Esophagus muscularis mucosa (tissue), 4 donors: ENCODE measurements at regions of chr2 and their contacts with region 1.

Region 1: DNA sequence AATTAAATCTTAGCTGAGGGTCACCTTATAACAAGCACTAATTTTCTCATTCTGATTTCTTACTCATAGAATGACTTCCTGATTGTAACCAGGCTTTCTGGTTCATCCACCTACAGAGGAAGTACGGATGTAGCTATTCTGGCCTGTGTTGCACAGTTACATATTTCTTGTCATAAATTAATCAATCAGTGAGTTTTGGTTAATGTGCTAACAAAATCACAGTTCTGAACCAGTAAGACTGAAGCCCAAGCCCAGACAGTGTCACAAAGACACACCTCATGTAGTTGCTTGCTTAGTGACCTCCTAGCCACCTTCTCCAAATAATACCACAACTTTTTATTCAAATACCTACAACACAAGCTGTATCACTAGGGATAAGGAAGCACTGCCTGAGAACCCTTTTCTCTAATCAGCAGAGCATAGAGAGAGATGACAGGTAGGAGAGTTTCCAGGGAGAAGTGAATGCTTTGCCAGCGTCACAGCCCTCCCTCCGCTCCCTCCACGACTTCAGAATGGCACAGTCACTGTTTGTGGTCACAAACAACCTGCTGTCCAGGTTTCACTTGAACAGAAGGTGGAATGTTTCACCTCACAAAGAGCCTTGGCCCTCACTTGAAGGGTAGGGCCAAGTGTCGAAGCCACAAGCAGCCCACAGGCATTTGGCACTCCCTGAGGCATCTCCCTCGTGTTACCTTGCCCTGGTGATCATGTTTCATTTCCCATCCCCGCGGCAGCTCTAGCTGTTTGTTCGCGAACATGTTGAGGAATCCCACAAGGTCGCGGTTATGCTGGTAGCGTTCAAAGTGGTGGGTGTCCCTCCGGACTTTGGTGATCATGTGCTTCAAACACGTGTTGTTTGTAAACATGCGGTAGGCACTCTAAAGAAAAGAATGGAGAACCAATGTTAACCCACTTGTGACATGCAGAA is 120.8 kb upstream of the STK17B start:
- DNase-seq: no peak
- H3K4me3 ChIP-seq: no peak overlapping the region
- H3K27ac ChIP-seq: no peak overlapping the region
- H3K4me1 ChIP-seq: peaks cover 0 to 17% (median 0%) of the 10 kb centered on the region in 4 donors
- H3K27me3 ChIP-seq: no peaks in the 10 kb centered on the region
- CTCF ChIP-seq: no peak
- EP300 ChIP-seq: no peak
- POLR2A ChIP-seq: no peak

Region 2: GRCh38 chr2:196088203-196088602 is 203.9 kb before region 1 on chr2:
- intact Hi-C with region 1: loop called (anchors 10 kb)
- DNase-seq: no peak
- H3K4me3 ChIP-seq: no peak overlapping the region
- H3K27ac ChIP-seq: no peak overlapping the region
- H3K4me1 ChIP-seq: no peaks in the 10 kb centered on the region
- H3K27me3 ChIP-seq: peaks cover 0 to 5% (median 0%) of the 10 kb centered on the region in 4 donors
- CTCF ChIP-seq: no peak
- EP300 ChIP-seq: no peak
- POLR2A ChIP-seq: no peak

Region 3: DNA sequence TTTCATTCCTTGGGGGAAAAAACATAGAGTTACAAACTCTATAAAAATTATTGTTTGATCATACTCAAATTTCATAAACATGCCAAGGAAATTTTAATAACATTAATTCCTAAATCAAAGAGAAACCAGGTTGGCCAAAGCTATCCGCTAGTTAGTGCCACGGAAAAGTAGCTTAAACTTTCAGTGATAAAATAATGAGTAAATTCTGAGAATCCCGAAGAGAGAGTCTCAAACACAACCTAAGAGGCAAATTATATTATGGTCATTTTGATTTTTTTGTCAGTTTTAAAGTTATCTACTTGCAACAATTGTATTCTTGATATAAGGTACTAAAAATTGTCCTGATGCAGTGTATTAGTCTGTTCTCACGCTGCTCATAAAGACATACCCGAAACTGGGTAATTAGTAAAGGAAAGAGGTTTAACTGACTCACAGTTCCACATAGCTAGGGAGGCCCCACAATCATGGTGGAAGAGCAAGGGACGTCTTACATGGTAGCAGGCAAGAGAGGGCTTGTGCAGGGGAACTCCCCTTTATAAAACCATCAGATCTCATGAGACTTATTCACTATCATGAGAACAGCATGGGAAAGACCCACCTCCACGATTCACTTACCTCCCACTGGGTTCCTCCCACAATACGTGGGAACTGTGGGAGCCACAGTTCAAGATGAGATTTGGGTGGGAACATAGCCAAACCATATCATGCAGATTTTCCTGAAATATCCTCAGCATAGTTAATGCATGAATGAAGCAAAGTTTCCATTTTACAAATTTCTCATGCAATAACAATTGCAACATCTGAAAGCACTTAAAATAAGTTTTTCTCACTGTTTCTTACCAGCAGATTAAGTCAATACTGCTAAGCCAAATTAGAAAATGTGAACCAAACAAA is 85.1 kb after region 1 on chr2:
- intact Hi-C with region 1: no loop called
- DNase-seq: no peak
- H3K4me3 ChIP-seq: no peak overlapping the region
- H3K27ac ChIP-seq: no peak overlapping the region
- H3K4me1 ChIP-seq: peaks cover 25 to 35% (median 29%) of the 10 kb centered on the region in 4 donors
- H3K27me3 ChIP-seq: no peaks in the 10 kb centered on the region
- CTCF ChIP-seq: no peak
- EP300 ChIP-seq: no peak
- POLR2A ChIP-seq: no peak

Region 4: GRCh38 chr2:196441527-196441926 is 149.4 kb after region 1 on chr2:
- intact Hi-C with region 1: no loop called
- DNase-seq: no peak
- H3K4me3 ChIP-seq: no peak overlapping the region
- H3K27ac ChIP-seq: no peak overlapping the region
- H3K4me1 ChIP-seq: no peaks in the 10 kb centered on the region
- H3K27me3 ChIP-seq: no peaks in the 10 kb centered on the region
- CTCF ChIP-seq: no peak
- EP300 ChIP-seq: no peak
- POLR2A ChIP-seq: no peak

Region 5: DNA sequence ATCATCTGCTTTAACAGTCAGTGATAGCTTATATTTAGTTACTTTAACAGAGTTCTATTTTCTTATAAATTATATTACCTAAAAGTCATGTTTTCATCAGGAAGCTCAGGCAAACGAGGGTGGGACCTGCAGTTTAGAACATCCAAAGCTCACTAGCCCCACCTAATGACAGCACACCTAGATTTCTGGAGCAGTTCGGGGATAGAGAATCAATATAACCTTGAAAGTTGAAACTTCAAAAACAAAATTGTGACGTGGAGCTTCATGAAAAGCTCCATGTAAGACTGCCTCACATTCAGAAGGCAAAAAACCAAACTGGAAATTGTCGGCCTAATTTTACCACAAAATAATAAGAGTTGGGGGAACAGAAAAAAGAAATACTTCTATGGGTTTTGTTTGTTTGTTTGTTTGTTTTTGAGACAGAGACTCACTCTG is 161.5 kb after region 1 on chr2:
- intact Hi-C with region 1: loop called (anchors 5 kb)
- DNase-seq: no peak
- H3K4me3 ChIP-seq: no peak overlapping the region
- H3K27ac ChIP-seq: no peak overlapping the region
- H3K4me1 ChIP-seq: peaks cover 0 to 7% (median 0%) of the 10 kb centered on the region in 4 donors
- H3K27me3 ChIP-seq: no peaks in the 10 kb centered on the region
- CTCF ChIP-seq: peak; percentile 45 to 52 (median 51)
- EP300 ChIP-seq: no peak
- POLR2A ChIP-seq: no peak